ENCODE measurements at regions of chr3 and their contacts with region 1.

Region 1: GRCh38 chr3:168165390-168166269 is 69.9 kb upstream of the GOLIM4 start:
- DNase-seq: no peak
- H3K4me3 ChIP-seq: peak overlapping the region; percentile 32
- H3K27ac ChIP-seq: peak overlapping the region; percentile 49
- H3K4me1 ChIP-seq: no peaks in the 10 kb centered on the region
- H3K27me3 ChIP-seq: no peaks in the 10 kb centered on the region
- CTCF ChIP-seq: peak; percentile 83

Region 2: DNA sequence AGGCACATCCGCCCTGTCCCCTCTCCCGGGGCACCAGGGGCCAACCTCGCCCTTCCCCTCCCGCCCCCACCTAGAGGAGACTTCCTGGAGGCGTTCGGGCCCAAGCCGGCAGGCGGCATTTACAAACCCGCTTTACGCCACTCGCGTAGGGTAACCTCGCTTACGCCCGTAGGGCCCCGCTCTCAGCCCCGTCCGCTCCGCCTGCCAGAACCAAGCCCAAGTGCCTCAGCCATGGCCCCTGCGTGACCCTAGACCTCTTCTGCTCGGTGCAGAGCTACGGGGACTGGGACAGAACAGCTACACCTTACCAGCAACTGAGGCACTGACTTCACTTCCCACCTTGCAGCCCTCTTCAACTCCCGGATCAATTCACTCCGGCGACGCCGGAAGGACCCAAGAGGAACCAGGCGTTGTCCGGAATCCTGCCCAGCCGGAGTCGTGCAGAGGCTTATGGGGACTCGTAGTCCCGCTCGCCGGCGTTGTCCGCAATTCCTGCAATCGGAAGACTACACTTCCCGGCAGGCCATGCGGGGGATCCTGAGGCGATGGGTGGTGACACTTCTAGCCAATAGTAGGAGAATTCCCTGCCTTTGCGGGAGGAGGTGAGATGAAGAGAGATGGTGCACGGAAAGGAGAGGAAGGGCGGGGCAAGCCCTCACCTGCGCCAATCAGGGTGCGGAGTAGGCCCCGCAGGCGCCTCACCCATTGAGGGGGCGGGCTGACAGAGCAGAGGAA is 431.0 kb before region 1 on chr3 and contains the start of gene PDCD10:
- intact Hi-C with region 1: no loop called
- DNase-seq: peak; percentile 98
- H3K4me3 ChIP-seq: peak within 1 kb of the TSS; percentile 96
- H3K27ac ChIP-seq: peak within 1 kb of the TSS; percentile 96
- H3K4me1 ChIP-seq: peaks cover 71% of the 10 kb centered on the region
- H3K27me3 ChIP-seq: no peaks in the 10 kb centered on the region
- CTCF ChIP-seq: no peak
- total RNA-seq, gene PDCD10: 35.1 TPM

Region 3: DNA sequence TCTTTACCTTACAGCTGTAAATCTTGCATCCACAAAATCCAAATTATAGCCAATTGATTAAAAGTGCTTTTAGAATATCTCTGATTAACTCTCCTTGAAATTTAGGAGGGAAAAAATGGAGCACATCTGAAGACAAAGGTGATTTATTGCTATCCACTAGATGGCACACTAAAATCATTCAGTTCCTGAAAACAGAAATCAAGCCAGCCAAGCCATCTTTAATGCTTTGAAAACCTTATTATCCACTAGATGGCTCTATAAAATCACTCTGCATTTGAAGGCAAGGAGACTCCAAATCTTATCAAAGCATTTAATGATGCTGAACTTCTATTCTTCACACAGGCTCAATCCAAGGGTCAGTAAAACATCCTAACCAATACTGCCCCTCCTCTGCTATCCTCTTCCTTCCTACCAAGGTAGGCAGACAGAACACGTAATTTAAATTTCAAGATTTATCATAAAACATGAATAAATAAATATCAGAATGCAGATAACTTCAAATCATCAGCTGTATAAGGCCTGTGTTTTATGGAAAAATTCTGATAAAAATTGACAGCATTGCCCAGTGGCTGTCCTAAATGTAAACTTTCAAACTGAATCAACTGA is 118.3 kb before region 1 on chr3:
- intact Hi-C with region 1: loop called (anchors 1 kb)
- DNase-seq: no peak
- H3K4me3 ChIP-seq: no peak overlapping the region
- H3K27ac ChIP-seq: no peak overlapping the region
- H3K4me1 ChIP-seq: peaks cover 68% of the 10 kb centered on the region
- H3K27me3 ChIP-seq: no peaks in the 10 kb centered on the region
- CTCF ChIP-seq: peak; percentile 94

Measured in left ventricle myocardium inferior (tissue), 1 donor.